Left colon (tissue), 2 donors: ENCODE measurements at regions of chr10 and their contacts with region 1.

Region 1: DNA sequence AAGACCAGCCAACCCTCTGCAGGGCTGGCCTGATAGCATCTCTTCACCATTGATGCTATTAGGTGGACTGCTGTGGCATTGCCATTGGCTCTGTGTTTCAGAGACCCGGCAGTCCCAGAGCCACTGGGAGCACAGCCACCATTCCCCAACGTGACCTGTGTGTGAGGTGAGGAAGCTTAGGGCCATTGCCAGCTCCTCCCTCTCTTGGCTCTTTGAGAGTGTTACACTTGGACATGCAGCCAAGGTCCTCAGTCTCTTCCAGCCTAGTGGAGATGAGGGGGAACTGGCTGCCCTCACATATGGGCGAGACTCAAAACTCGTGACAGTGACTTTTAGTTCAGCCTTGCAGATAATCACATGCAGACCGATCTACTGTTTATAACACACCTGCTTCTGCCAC is 39.3 kb upstream of the HMX3 start:
- DNase-seq: no peak
- ATAC-seq: no peak

Region 2: GRCh38 chr10:122725768-122726167 is 370.7 kb before region 1 on chr10:
- intact Hi-C with region 1: no loop called
- DNase-seq: no peak
- ATAC-seq: no peak

Region 3: DNA sequence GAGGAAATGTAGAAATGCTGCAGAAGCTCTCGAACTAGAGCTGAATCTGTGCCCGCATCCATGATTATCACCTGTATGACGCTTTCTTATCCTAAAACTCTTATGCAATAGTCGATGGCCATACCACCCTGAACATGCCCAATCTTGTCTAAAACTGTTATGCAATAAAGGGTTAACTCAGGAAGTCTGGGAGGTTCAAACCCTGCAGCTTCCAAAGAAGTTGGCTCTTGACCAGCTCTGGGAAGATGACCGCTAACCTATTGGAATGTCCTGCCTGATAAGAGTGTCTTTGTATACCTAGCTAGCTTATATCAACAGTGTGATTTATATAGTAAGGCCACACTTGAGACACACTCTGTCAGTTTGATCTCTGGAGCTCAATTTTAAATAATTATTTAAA is 139.0 kb before region 1 on chr10:
- intact Hi-C with region 1: no loop called
- DNase-seq: no peak
- ATAC-seq: no peak

Region 4: GRCh38 chr10:123021517-123021916 is 74.9 kb before region 1 on chr10:
- intact Hi-C with region 1: loop called in 1 of 2 experiments (anchors 5 kb)
- DNase-seq: no peak
- ATAC-seq: peak; percentile 63